ENCODE measurements at regions of chr18 and their contacts with region 1.

Region 1: DNA sequence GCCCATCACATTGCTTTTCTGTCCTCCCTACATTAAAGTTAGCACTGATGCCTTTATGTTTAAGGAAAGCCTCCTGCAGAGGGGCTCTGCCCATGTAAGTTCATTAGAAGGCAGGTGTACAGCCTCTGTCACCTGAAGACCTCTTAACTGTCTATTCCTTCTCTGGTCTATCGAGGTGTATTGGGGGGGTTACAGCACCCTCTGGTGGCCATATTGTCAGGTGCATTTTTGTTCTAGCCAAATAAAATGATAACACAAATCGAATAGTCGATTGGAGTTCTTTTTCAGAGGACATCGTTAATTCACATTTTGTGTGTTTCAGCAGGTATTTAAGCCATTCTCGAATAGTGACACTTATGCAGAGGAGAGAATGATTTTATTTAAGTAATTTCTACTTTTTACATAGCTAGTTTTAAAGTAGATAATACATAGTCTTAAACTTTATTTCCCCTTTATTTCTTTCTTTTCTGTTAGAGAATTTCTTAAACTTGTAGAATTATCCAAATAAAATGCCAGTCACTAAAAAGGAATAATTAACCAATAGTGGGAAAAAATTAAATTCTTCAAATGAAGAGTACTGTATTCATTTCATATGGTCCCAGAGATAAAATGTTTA is 136.8 kb downstream of the NEDD4L start:
- DNase-seq: peak; percentile 65
- H3K4me3 ChIP-seq: no peak overlapping the region
- H3K27ac ChIP-seq: no peak overlapping the region
- H3K4me1 ChIP-seq: peaks cover 22 to 35% of the 10 kb centered on the region in 2 experiments
- H3K27me3 ChIP-seq: no peaks in the 10 kb centered on the region
- CTCF ChIP-seq: peak; percentile 96
- EP300 ChIP-seq: no peak
- RAD21 ChIP-seq: peak; percentile 79

Region 2: GRCh38 chr18:58195278-58195765 is 14.5 kb after region 1 on chr18:
- CTCF ChIA-PET with region 1: interaction called, 43 read pairs
- POLR2A ChIA-PET with region 1: no interaction called
- DNase-seq: no peak
- H3K4me3 ChIP-seq: no peak overlapping the region
- H3K27ac ChIP-seq: no peak overlapping the region
- H3K4me1 ChIP-seq: peaks cover 4 to 12% of the 10 kb centered on the region in 2 experiments; a peak in 3 of 4 replicates
- H3K27me3 ChIP-seq: no peaks in the 10 kb centered on the region
- CTCF ChIP-seq: no peak
- EP300 ChIP-seq: no peak
- RAD21 ChIP-seq: no peak